ENCODE measurements at regions of chr6 and their contacts with region 1.

Region 1: GRCh38 chr6:35663447-35664235 is 25.1 kb downstream of the FKBP5 start:
- DNase-seq: peak in 1 of 9 experiments; percentile 46
- ATAC-seq: peak; percentile 77
- H3K4me3 ChIP-seq: no peak overlapping the region
- H3K4me3 Mint-ChIP-seq: no peak overlapping the region
- H3K27ac ChIP-seq: no peak overlapping the region
- H3K27ac Mint-ChIP-seq: no peak overlapping the region
- H3K4me1 ChIP-seq: peaks cover 57% of the 10 kb centered on the region
- H3K4me1 Mint-ChIP-seq: peaks cover 17% of the 10 kb centered on the region
- H3K27me3 ChIP-seq: no peaks in the 10 kb centered on the region
- H3K27me3 Mint-ChIP-seq: no peaks in the 10 kb centered on the region
- CTCF ChIP-seq: no peak

Region 2: DNA sequence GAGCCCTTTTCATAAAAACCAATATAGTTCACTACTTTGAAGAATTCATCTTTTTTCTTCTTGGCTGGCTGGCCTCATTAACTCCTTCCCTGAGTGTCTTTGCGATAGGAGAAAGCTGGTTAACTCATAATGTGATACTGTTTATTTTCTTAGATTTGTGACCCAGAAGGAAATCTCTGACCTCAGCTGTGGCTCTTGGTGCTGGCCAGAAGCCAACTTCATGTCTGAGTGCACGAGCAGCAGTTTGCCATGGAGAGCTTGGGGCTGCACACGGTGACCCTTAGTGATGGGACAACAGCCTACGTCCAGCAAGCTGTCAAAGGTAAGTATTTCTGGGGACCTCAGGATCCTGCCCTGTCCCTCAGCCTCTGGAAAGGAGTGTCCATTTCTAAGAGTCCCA is 382.7 kb before region 1 on chr6:
- CTCF ChIA-PET with region 1: no interaction called
- POLR2A ChIA-PET with region 1: no interaction called
- intact Hi-C with region 1: no loop called
- DNase-seq: no peak
- ATAC-seq: no peak
- H3K4me3 ChIP-seq: no peak overlapping the region
- H3K4me3 Mint-ChIP-seq: no peak overlapping the region
- H3K27ac ChIP-seq: no peak overlapping the region
- H3K27ac Mint-ChIP-seq: no peak overlapping the region
- H3K4me1 ChIP-seq: no peaks in the 10 kb centered on the region
- H3K4me1 Mint-ChIP-seq: peaks cover 9% of the 10 kb centered on the region
- H3K27me3 ChIP-seq: no peaks in the 10 kb centered on the region
- H3K27me3 Mint-ChIP-seq: no peaks in the 10 kb centered on the region
- CTCF ChIP-seq: no peak

Region 3: DNA sequence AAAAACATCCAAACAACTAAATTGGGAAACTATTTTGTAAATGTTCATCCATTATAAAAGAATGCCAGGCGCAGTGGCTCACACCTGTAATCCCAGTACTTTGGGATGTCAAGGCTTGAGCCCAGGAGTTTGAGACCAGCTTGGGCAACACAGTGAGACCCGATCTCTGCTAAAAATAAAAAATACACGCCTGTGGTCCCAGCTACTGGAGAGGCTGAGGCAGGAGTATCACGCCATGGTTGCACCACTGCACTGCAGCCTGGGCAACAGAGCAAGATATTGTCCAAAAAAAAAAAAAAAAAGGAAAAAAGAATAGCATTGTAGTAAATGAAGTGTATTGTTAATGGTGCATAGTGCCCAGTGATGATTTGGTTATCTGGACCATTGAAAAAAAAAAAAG is 13.6 kb before region 1 on chr6:
- CTCF ChIA-PET with region 1: interaction called, 5 read pairs
- POLR2A ChIA-PET with region 1: interaction called, 10 read pairs
- intact Hi-C with region 1: loop called in 1 of 2 experiments (anchors 2 kb)
- DNase-seq: no peak
- ATAC-seq: no peak
- H3K4me3 ChIP-seq: no peak overlapping the region
- H3K4me3 Mint-ChIP-seq: no peak overlapping the region
- H3K27ac ChIP-seq: no peak overlapping the region
- H3K27ac Mint-ChIP-seq: no peak overlapping the region
- H3K4me1 ChIP-seq: peaks cover 37% of the 10 kb centered on the region
- H3K4me1 Mint-ChIP-seq: peaks cover 56% of the 10 kb centered on the region
- H3K27me3 ChIP-seq: no peaks in the 10 kb centered on the region
- H3K27me3 Mint-ChIP-seq: no peaks in the 10 kb centered on the region
- CTCF ChIP-seq: no peak

Region 4: DNA sequence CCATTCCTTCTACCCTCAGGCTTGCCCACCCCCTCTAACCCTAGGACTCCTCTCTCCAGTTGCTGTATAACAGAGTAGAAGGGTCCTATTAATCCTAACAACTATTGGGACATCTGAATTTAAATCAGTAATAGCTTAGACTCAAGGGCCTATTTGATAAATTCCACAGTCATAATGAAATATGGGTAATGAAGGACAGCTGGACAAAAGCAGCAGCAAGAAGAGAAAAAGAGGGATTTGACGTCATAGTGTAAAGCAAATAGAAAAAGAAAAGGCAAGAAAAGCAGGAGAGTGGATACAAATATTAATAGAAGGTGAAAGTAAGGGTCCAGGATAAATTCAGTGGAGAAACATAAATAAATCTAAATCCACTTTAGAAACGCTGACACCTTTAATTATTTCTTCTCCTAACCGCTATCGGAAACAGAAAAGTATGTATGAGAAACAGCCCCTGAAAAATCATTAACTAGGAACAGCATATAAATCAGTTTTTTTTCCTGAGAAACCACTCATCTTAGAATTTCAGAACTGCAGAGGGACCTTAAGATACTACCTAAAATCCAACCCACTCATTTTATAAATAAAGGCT is 12.3 kb after region 1 on chr6:
- CTCF ChIA-PET with region 1: interaction called, 4 read pairs
- POLR2A ChIA-PET with region 1: interaction called, 5 read pairs
- intact Hi-C with region 1: loop called in 1 of 2 experiments (anchors 1 kb)
- DNase-seq: no peak
- ATAC-seq: no peak
- H3K4me3 ChIP-seq: no peak overlapping the region
- H3K4me3 Mint-ChIP-seq: no peak overlapping the region
- H3K27ac ChIP-seq: no peak overlapping the region
- H3K27ac Mint-ChIP-seq: peak overlapping the region; percentile 89
- H3K4me1 ChIP-seq: peaks cover 69% of the 10 kb centered on the region
- H3K4me1 Mint-ChIP-seq: peaks cover 75% of the 10 kb centered on the region
- H3K27me3 ChIP-seq: no peaks in the 10 kb centered on the region
- H3K27me3 Mint-ChIP-seq: no peaks in the 10 kb centered on the region
- CTCF ChIP-seq: no peak

Region 5: GRCh38 chr6:35681298-35681697 is 17.7 kb after region 1 on chr6:
- CTCF ChIA-PET with region 1: interaction called, 4 read pairs
- POLR2A ChIA-PET with region 1: interaction called, 5 read pairs
- intact Hi-C with region 1: loop called in 1 of 2 experiments (anchors 1 kb)
- DNase-seq: no peak
- ATAC-seq: no peak
- H3K4me3 ChIP-seq: no peak overlapping the region
- H3K4me3 Mint-ChIP-seq: peak overlapping the region; percentile 4
- H3K27ac ChIP-seq: no peak overlapping the region
- H3K27ac Mint-ChIP-seq: peak overlapping the region; percentile 79
- H3K4me1 ChIP-seq: peaks cover 56% of the 10 kb centered on the region
- H3K4me1 Mint-ChIP-seq: peaks cover 62% of the 10 kb centered on the region
- H3K27me3 ChIP-seq: no peaks in the 10 kb centered on the region
- H3K27me3 Mint-ChIP-seq: no peaks in the 10 kb centered on the region
- CTCF ChIP-seq: no peak

Region 6: GRCh38 chr6:35850208-35850607 is 186.6 kb after region 1 on chr6:
- CTCF ChIA-PET with region 1: no interaction called
- POLR2A ChIA-PET with region 1: no interaction called
- intact Hi-C with region 1: no loop called
- DNase-seq: no peak
- ATAC-seq: no peak
- H3K4me3 ChIP-seq: no peak overlapping the region
- H3K4me3 Mint-ChIP-seq: no peak overlapping the region
- H3K27ac ChIP-seq: no peak overlapping the region
- H3K27ac Mint-ChIP-seq: no peak overlapping the region
- H3K4me1 ChIP-seq: no peaks in the 10 kb centered on the region
- H3K4me1 Mint-ChIP-seq: no peaks in the 10 kb centered on the region
- H3K27me3 ChIP-seq: no peaks in the 10 kb centered on the region
- H3K27me3 Mint-ChIP-seq: no peaks in the 10 kb centered on the region
- CTCF ChIP-seq: no peak

Measured in CD8-positive, alpha-beta T cell (primary cell).